AG04449 (cell line): ENCODE measurements at regions of chr4 and their contacts with region 1.

Region 1: DNA sequence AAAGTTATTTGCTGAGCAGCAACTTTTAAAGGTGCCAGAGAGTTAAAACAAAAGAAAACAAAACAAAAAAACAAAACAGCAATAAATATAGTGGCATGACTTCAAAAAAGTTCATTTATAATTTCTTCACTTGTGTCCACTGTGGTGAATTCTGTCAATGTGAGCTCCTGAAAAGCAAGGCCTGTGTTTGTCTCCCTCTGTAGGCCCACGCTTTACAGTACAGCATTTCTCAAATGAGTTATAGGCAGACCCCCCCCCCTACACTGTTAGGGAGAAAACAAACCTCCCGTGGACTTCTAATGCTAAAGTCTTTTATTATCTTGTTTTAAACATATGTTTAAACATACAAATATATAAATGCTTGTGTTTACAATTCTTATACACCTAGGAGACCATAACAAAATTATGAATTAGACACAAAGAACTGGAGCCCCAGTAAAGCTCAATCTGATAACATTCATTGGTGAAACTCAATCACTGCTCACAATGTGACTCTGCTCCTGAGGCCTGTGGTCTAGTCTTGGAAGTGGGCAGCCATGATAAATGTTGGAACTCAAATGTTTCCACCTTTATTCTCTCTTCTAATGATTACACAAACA is 47.0 kb upstream of the SCOC start:
- DNase-seq: no peak
- H3K4me3 ChIP-seq: no peak overlapping the region
- CTCF ChIP-seq: peak; percentile 68

Region 2: DNA sequence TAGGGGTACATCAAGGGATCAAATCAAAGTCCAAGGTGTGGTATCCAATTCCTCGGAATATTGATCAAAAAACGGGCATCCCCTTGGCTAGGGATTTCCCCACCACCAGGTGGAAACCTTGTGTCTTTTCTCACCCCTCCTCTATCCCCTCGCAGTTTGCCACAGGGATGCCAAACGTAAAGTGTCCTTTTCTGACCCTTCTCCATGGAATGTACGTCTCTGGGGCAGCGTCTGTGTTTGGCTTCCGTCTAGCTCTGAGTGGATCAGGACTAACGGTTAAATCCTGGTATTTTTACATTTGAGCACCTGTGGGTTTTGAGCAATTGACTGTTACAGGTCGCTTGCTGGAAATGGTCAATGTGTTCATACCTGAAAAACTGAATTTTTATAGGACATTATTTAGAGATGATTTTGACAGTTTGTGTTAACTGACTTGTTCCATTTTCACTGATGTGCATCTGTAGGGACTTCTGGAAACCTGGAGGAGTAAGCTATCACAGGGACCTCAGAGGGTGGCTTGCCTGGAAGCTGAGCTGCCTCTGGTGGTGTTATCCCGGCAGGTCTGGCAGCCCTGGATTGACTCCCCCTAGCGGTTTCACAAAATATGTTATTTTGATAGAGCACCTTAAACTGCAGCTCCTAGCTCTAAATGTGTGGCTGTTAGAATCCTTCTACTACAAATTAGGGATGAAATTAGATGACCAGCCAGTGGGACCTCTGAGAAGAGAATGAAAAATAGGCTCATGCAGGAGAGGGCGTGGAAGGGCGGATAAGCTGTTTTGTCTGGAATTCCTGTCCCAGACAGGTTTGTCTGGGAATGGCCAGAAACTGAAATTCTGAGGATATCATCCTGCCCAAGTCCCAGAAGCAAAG is 669.6 kb before region 1 on chr4:
- CTCF ChIA-PET with region 1: interaction called, 13 read pairs
- POLR2A ChIA-PET with region 1: no interaction called
- DNase-seq: no peak
- H3K4me3 ChIP-seq: no peak overlapping the region
- CTCF ChIP-seq: peak; percentile 86

Region 3: GRCh38 chr4:139872274-139872673 is 454.2 kb before region 1 on chr4:
- CTCF ChIA-PET with region 1: no interaction called
- POLR2A ChIA-PET with region 1: no interaction called
- DNase-seq: peak; percentile 87
- H3K4me3 ChIP-seq: no peak overlapping the region
- CTCF ChIP-seq: no peak

Region 4: GRCh38 chr4:140012688-140013486 is 313.6 kb before region 1 on chr4:
- CTCF ChIA-PET with region 1: interaction called, 22 read pairs
- POLR2A ChIA-PET with region 1: no interaction called
- DNase-seq: no peak
- H3K4me3 ChIP-seq: no peak overlapping the region
- CTCF ChIP-seq: peak; percentile 55

Region 5: DNA sequence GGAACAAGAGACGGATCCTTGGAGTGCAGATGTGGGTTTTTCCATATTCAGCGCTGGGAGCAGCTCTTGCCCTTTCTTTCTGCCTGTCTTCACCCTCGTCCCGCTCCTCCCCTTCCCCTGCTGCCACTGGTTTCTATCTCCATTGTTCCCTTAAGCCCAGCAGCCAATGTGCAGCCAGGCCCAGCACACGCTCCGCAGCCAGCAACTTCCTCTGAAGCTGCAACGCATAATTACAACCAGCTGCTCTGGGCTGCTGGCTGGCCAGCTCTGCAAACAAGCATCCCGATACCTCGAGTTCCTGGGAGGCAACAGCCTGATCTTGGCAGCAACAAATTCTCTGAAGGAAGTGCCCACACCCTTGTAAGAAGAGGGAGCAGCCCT is 88.9 kb before region 1 on chr4:
- CTCF ChIA-PET with region 1: no interaction called
- POLR2A ChIA-PET with region 1: no interaction called
- DNase-seq: peak; percentile 80
- H3K4me3 ChIP-seq: peak overlapping the region; percentile 30
- CTCF ChIP-seq: no peak

Region 6: GRCh38 chr4:140351093-140352075 is 24.9 kb after region 1 on chr4:
- CTCF ChIA-PET with region 1: interaction called, 11 read pairs
- POLR2A ChIA-PET with region 1: no interaction called
- DNase-seq: no peak
- H3K4me3 ChIP-seq: no peak overlapping the region
- CTCF ChIP-seq: no peak

Region 7: DNA sequence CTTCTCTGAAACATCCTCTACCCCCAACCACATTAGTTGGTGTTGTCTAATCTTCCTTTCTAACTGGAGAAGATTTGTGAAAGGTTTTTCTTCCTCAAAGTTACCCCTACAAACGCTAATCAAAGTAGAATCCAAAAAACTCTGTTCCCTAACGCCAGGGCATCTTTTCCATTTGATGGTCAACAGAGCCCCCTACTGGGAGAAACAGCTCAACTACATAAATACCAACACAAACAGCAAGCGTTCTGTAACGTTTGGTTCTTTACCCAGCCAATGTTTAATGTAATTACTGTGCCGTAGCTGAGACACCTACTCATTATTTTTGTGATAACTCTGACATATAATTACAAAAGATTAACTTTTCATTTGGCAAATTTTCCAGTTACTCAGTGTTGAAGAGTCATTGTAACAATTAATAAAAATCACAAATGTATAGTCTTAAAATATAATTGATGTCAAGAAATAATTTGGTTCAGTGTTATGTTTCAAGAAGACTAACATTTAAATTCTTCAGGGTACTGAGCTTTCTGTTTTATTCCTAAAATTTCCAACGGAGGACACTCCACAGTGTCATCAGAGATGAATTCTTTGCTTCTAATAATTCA is 524.6 kb after region 1 on chr4:
- CTCF ChIA-PET with region 1: interaction called, 57 read pairs
- POLR2A ChIA-PET with region 1: no interaction called
- DNase-seq: no peak
- H3K4me3 ChIP-seq: no peak overlapping the region
- CTCF ChIP-seq: peak; percentile 63